Right ventricle myocardium inferior (tissue), 1 donor: ENCODE measurements at regions of chr10 and their contacts with region 1.

Region 1: DNA sequence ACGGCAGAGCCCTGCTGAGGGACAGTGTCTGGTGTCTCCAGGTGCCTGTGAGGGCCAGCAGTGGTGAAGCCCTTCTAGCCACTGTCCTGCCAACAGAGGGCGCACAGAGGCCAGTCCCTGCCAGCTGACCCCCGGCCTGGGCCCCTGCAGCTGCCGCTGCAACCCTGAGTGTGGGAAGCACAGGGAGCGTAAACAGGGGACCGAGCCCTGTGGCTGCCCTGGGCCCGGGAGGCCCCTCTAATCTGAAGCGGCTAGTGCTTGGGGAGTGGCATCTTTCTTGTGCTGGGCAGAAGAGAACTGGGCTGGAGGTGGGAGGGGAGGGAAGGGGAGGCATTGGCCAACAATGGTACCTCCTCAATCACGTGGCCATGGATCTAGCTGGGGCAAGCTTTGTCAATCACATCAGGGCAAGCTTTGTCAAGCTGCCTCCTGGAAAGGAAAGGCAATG is 34.6 kb downstream of the TRIM8 start:
- DNase-seq: peak; percentile 86
- ATAC-seq: peak; percentile 56

Region 2: GRCh38 chr10:102641880-102642735 is 36.8 kb before region 1 on chr10:
- intact Hi-C with region 1: no loop called
- DNase-seq: peak; percentile 99
- ATAC-seq: peak; percentile 77

Region 3: GRCh38 chr10:102713814-102714620 is 35.2 kb after region 1 on chr10 and contains the start of gene ARL3:
- intact Hi-C with region 1: loop called (anchors 5 kb)
- DNase-seq: peak; percentile 99
- ATAC-seq: peak; percentile 99
- total RNA-seq, gene ARL3: 15.4 TPM

Region 4: GRCh38 chr10:102729029-102730026 is 50.5 kb after region 1 on chr10:
- intact Hi-C with region 1: no loop called
- DNase-seq: peak; percentile 94
- ATAC-seq: peak; percentile 92